ENCODE measurements at regions of chr1 and their contacts with region 1.

Region 1: DNA sequence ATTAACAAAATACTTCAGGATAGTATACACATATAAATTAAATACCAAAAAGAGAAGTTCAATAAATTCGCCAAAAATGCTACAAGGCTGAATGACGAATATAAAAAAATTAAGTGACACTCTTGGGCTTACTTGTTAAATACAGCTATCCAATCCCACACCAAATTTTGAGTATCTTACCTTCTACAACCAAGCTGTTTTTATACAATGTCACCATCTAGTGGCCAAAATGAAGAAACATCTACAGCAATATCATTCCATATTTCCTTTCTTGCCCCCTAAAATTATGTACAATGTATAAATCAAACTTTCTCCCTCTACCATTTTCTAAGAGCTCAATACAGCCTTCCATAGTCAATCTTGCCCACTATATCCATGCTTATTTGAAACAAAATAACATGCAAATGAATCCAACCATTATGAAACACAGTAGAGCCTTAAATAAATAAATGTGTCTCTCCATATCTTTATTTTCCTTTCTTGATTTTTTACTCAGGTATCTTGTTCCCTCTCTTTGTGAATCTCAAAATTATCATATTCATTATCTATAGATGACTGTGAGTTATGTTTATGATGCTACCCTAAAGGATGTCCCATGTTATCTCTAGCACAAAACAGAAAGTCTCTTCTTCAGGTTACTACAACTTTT is 86.3 kb downstream of the ACBD6 start:
- DNase-seq: no peak
- H3K4me3 Mint-ChIP-seq: no peak overlapping the region
- H3K27ac Mint-ChIP-seq: no peak overlapping the region
- H3K4me1 Mint-ChIP-seq: no peaks in the 10 kb centered on the region
- H3K27me3 Mint-ChIP-seq: no peaks in the 10 kb centered on the region

Region 2: GRCh38 chr1:180188091-180188506 is 228.0 kb before region 1 on chr1:
- intact Hi-C with region 1: no loop called
- DNase-seq: no peak
- H3K4me3 Mint-ChIP-seq: no peak overlapping the region
- H3K27ac Mint-ChIP-seq: no peak overlapping the region
- H3K4me1 Mint-ChIP-seq: peaks cover 4% of the 10 kb centered on the region
- H3K27me3 Mint-ChIP-seq: no peaks in the 10 kb centered on the region

Region 3: GRCh38 chr1:180365039-180365438 is 51.1 kb before region 1 on chr1:
- intact Hi-C with region 1: loop called (anchors 5 kb)
- DNase-seq: no peak
- H3K4me3 Mint-ChIP-seq: no peak overlapping the region
- H3K27ac Mint-ChIP-seq: no peak overlapping the region
- H3K4me1 Mint-ChIP-seq: peaks cover 3% of the 10 kb centered on the region
- H3K27me3 Mint-ChIP-seq: no peaks in the 10 kb centered on the region

Measured in activated CD4-positive, alpha-beta T cell treated with anti-CD3 and anti-CD28 coated beads, Interleukin-2, amount 10 ng/mL, durations not matched to agents 24 days and 14 days (primary cell).